ENCODE measurements at regions of chr1 and their contacts with region 1.

Region 1: DNA sequence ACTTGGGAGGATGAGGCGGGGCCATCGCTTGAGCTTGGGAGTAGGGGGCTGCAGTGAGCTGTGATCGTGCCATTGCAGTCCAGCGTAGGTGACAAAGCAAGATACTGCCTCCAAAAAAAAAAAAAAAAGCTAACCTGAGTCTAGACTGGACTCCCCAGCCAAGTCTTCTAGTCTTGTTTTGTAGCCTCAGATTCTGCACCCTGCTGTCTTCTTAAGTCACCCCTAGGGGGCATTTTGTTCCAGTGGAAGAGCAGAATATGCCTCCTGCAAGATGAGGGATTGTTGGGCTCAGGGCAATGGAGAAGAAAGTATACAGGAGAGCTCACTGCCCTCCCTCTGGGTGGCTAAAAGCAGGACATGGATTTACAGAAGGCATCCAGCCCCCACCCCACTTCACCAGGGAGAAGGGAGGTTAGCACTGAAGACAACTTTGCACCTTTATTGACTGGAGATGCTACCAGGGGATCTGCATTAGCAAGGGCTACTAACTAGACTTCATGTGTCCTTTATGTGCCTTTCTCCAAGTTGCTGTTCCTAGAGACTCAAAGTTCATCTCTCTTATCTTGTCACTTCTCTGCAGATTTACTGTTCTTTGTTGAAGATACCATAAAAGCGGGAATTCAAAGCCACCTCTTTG is 15.3 kb upstream of the RNF187 start:
- DNase-seq: peak; percentile 32
- H3K4me3 Mint-ChIP-seq: no peak overlapping the region
- H3K27ac Mint-ChIP-seq: no peak overlapping the region
- H3K4me1 Mint-ChIP-seq: peaks cover 7% of the 10 kb centered on the region
- H3K27me3 Mint-ChIP-seq: peaks cover 6% of the 10 kb centered on the region

Region 2: GRCh38 chr1:228486596-228487335 is 14.9 kb after region 1 on chr1:
- CTCF ChIA-PET with region 1: interaction called, 22 read pairs
- POLR2A ChIA-PET with region 1: interaction called, 3 read pairs
- intact Hi-C with region 1: no loop called
- DNase-seq: peak; percentile 85
- H3K4me3 Mint-ChIP-seq: peak overlapping the region; percentile 96
- H3K27ac Mint-ChIP-seq: peak overlapping the region; percentile 99
- H3K4me1 Mint-ChIP-seq: peaks cover 41% of the 10 kb centered on the region
- H3K27me3 Mint-ChIP-seq: no peaks in the 10 kb centered on the region

Region 3: GRCh38 chr1:228555074-228555989 is 83.5 kb after region 1 on chr1:
- CTCF ChIA-PET with region 1: no interaction called
- POLR2A ChIA-PET with region 1: no interaction called
- intact Hi-C with region 1: no loop called
- DNase-seq: peak; percentile 20
- H3K4me3 Mint-ChIP-seq: no peak overlapping the region
- H3K27ac Mint-ChIP-seq: no peak overlapping the region
- H3K4me1 Mint-ChIP-seq: no peaks in the 10 kb centered on the region
- H3K27me3 Mint-ChIP-seq: no peaks in the 10 kb centered on the region

Measured in activated CD4-positive, alpha-beta memory T cell treated with anti-CD3 and anti-CD28 coated beads for 36 hours (primary cell).